Endothelial cell of umbilical vein (primary cell): ENCODE measurements at regions of chr19 and their contacts with region 1.

Region 1: DNA sequence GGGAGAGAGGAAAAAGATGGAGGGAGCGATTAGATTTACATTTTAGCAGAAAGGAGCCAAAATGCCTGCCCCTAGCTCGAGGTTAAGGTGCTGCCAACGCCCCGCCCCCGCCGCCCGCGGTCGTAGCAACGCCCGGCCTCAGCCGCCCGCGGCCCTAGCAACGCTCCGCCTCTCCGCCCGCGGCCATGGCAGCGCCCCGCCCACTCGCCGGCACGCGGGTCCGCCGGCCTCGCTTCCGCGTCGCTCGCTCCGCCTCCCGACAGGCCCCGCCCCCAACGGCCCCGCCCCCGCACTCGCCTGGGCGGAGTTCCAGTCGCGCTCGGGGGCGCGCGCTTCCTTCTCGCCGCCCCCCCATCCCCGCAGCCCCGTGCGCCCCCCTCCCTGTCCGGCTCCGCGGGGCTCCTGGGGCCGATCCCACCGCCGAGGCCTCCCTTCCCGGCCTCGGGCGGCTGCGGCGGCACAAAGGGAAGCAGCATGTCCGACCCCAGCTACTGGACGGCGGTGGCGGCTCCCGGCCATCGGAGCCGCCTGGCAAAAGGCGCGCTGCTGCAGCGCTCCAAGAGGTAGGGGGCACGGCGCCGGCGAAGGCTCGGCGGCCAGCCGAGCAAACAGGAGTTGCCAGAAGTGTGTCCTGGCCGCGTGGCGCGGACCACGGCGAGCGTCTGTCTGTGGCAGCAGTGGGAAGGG is 20.3 kb downstream of the MAST3 start:
- DNase-seq: peak; percentile 83
- H3K4me3 ChIP-seq: peak overlapping the region; percentile 33 to 63 (median 51)
- H3K27ac ChIP-seq: no peak overlapping the region
- H3K4me1 ChIP-seq: peaks cover 10% of the 10 kb centered on the region
- H3K27me3 ChIP-seq: no peaks in the 10 kb centered on the region
- CTCF ChIP-seq: peak in 1 of 2 donors; percentile 32
- POLR2A ChIP-seq: no peak

Region 2: GRCh38 chr19:18000935-18001778 is 116.7 kb before region 1 on chr19:
- CTCF ChIA-PET with region 1: interaction called, 4 read pairs
- POLR2A ChIA-PET with region 1: no interaction called
- dilution Hi-C with region 1: no loop called
- intact Hi-C with region 1: loop called (anchors 2 kb)
- DNase-seq: peak; percentile 82
- H3K4me3 ChIP-seq: peak overlapping the region; percentile 73 to 85 (median 77)
- H3K27ac ChIP-seq: peak overlapping the region; percentile 90
- H3K4me1 ChIP-seq: peaks cover 15% of the 10 kb centered on the region
- H3K27me3 ChIP-seq: no peaks in the 10 kb centered on the region
- CTCF ChIP-seq: no peak
- POLR2A ChIP-seq: peak; percentile 66

Region 3: DNA sequence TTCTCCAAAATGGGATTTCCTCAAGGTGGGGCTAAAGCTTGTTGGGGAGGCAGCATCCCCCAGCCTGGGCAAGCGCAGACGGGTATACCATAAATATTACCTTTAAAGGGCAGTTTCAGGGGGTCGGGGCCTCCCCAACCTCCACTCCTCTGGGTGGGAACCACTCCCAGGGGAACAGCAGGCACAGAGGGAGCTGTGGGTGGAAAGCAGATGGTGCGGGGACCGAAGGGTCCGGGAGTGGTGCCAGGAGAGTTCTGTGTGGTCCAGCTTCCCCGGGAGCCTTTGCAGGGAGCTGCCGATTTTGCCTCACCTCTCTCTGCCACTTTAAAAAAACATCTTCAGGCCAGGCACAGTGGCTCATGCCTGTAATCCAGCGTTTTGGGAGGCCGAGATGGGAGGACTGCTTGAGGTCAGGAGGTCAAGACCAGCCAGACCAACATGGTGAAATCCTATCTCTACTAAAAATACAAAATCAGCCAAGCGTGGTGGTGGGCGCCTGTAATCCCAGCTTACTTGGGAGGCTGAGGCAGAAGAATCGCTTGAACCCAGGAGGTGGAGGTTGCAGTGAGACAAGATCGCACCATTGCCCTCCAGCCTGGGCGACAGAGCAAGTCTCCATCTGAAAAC is 14.8 kb before region 1 on chr19:
- CTCF ChIA-PET with region 1: interaction called, 22 read pairs
- POLR2A ChIA-PET with region 1: no interaction called
- dilution Hi-C with region 1: no loop called
- intact Hi-C with region 1: no loop called
- DNase-seq: no peak
- H3K4me3 ChIP-seq: no peak overlapping the region
- H3K27ac ChIP-seq: no peak overlapping the region
- H3K4me1 ChIP-seq: peaks cover 1% of the 10 kb centered on the region
- H3K27me3 ChIP-seq: peaks cover 15 to 18% of the 10 kb centered on the region in 2 experiments
- CTCF ChIP-seq: no peak
- POLR2A ChIP-seq: no peak

Region 4: DNA sequence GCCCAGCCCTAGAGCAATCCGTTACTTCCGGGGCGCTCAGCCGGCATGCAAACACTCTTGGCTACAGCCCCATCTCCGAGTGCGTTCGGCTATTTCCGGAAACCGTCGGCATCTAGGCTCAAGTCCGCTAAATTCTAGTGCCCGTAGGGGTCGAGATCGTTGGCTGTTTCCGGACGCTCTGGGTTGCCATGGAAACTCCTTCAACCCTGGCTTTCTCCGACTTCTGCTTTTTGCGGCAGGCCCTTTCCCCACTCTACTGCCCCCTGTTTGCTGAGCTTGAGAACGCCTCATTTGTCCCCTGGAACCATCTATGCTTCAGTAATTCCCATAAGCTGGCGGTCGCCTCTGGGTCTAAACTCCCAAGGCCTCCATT is 34.6 kb after region 1 on chr19:
- CTCF ChIA-PET with region 1: interaction called, 55 read pairs
- POLR2A ChIA-PET with region 1: no interaction called
- dilution Hi-C with region 1: no loop called
- intact Hi-C with region 1: loop called (anchors 1 kb)
- DNase-seq: peak; percentile 97
- H3K4me3 ChIP-seq: peak overlapping the region in 2 of 3 experiments; percentile 38 to 68
- H3K27ac ChIP-seq: peak overlapping the region; percentile 88
- H3K4me1 ChIP-seq: peaks cover 21% of the 10 kb centered on the region
- H3K27me3 ChIP-seq: no peaks in the 10 kb centered on the region
- CTCF ChIP-seq: peak; percentile 70 to 83
- POLR2A ChIP-seq: peak; percentile 84

Region 5: GRCh38 chr19:18173572-18174288 is 55.9 kb after region 1 on chr19 and contains the start of gene IFI30:
- CTCF ChIA-PET with region 1: interaction called, 138 read pairs
- POLR2A ChIA-PET with region 1: no interaction called
- dilution Hi-C with region 1: no loop called
- intact Hi-C with region 1: loop called (anchors 1 kb)
- DNase-seq: peak; percentile 37
- H3K4me3 ChIP-seq: peak within 1 kb of the TSS; percentile 30 to 59 (median 59)
- H3K27ac ChIP-seq: no peak within 1 kb of the TSS
- H3K4me1 ChIP-seq: peaks cover 3% of the 10 kb centered on the region
- H3K27me3 ChIP-seq: peaks cover 0 to 2% of the 10 kb centered on the region in 2 experiments
- CTCF ChIP-seq: no peak
- POLR2A ChIP-seq: no peak
- total RNA-seq, gene IFI30: 0.74 and 1.1 TPM in 2 replicates

Region 6: GRCh38 chr19:18203863-18204393 is 86.1 kb after region 1 on chr19 and contains the start of gene RAB3A:
- CTCF ChIA-PET with region 1: interaction called, 26 read pairs
- POLR2A ChIA-PET with region 1: no interaction called
- dilution Hi-C with region 1: no loop called
- intact Hi-C with region 1: no loop called
- DNase-seq: peak; percentile 100
- H3K4me3 ChIP-seq: peak within 1 kb of the TSS; percentile 46 to 81 (median 75)
- H3K27ac ChIP-seq: peak within 1 kb of the TSS; percentile 88
- H3K4me1 ChIP-seq: peaks cover 10% of the 10 kb centered on the region
- H3K27me3 ChIP-seq: peaks cover 0 to 2% of the 10 kb centered on the region in 2 experiments
- CTCF ChIP-seq: no peak
- POLR2A ChIP-seq: no peak
- total RNA-seq, gene RAB3A: 0.88 and 1.9 TPM in 2 replicates